ENCODE measurements at regions of chr12 and their contacts with region 1.

Region 1: DNA sequence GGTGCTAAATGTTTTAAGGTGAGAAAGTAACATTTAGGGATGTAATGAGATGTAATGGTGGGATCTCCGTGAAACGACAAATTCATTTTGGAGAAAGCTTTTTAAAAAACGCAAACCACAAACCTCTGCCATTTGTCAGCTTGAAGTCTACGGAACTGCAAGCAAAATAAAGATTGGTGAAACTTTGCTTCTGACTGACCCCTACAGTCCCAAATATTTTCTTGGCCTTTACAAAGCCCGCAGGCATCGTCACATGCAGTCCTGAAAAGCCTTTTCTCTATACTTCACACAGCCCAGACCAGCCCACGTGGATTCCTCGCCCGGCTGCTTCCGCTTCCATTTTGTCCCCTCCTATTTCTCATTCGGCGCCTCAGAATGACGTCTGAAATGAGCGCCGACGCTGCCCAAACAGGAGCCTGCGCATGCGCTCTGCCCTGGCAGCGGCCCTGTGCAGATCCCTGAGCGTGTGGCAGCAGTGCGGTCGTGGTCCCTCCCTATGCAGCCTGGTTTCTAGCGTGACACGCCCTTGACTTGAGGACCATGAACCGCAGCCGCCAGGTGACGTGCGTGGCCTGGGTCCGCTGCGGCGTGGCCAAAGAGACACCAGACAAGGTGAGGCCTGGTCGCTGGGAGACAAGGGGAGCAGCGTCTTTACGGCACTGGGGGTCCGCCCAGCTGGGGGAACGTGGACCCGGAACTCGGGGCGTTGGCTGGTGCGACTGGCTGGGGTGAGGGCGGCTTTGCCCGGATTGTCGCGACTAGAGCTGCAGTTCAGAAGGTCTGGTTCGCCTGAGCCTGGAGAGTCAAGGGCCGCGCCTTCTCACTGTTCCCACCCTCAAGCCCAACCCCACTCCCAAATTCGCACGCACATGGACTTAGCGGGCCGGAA is at the start of gene PWP1:
- DNase-seq: peak; percentile 82 to 91
- ATAC-seq: peak; percentile 97 to 98
- H3K4me3 ChIP-seq: peak within 1 kb of the TSS; percentile 74 to 97 (median 88)
- H3K27ac ChIP-seq: peak within 1 kb of the TSS; percentile 66 to 87 (median 82)
- H3K4me1 ChIP-seq: peaks cover 18 to 19% of the 10 kb centered on the region in 2 donors
- H3K27me3 ChIP-seq: no peaks in the 10 kb centered on the region
- CTCF ChIP-seq: peak in 1 of 5 experiments; percentile 16
- POLR2A ChIP-seq: peak; percentile 16 to 37
- total RNA-seq, gene PWP1: 37.9 to 62.1 (median 48.0) TPM

Region 2: DNA sequence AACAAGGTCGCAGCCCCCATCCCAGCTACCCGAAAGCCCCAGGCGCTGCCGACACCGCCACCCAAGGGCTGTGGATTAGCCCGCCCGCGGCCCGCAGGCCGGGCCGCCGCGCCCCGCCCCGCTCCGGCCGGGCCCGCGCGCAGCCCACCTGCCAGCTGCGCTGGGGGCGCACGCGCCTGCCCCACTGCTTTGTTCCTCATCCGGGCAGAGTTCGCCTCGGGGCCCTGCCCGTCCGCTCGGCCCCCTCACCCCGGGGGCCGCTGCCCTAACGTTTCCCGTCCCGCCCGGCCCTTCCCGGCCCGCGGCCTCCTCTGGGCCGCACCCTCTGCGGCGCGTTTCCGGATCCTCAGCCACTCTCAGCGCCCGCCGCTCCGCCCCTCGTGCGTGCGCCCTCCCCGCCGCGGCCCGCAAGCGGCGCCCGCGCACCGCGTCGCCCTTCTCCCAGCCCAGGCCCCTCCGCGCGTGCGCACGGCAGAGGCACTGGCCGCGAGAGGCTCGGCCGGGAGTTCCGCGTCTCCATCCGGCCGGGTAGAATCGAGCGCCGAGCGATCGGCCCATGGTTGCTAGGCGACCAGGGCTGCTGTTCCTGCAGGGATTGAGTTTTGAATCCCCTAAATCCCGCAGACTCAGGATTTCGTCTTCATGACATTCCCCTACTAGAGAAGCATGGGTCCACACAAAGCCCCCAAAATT is 75.4 kb after region 1 on chr12 and contains the start of gene PRDM4:
- in situ Hi-C with region 1: loop called in 1 of 4 experiments (anchors 5 kb)
- intact Hi-C with region 1: loop called (anchors 1 kb)
- DNase-seq: peak; percentile 87 to 91
- ATAC-seq: peak; percentile 95
- H3K4me3 ChIP-seq: peak within 1 kb of the TSS; percentile 73 to 93 (median 82)
- H3K27ac ChIP-seq: peak within 1 kb of the TSS; percentile 61 to 75 (median 67)
- H3K4me1 ChIP-seq: peaks cover 26 to 30% of the 10 kb centered on the region in 2 donors
- H3K27me3 ChIP-seq: no peaks in the 10 kb centered on the region
- CTCF ChIP-seq: peak in 4 of 5 experiments; percentile 33 to 60 (median 44)
- POLR2A ChIP-seq: peak; percentile 86 to 89
- total RNA-seq, gene PRDM4: 13.8 to 21.0 (median 19.2) TPM

Region 3: GRCh38 chr12:107912421-107913004 is 226.9 kb after region 1 on chr12:
- in situ Hi-C with region 1: no loop called
- intact Hi-C with region 1: no loop called
- DNase-seq: no peak
- ATAC-seq: no peak
- H3K4me3 ChIP-seq: no peak overlapping the region
- H3K27ac ChIP-seq: no peak overlapping the region
- H3K4me1 ChIP-seq: no peaks in the 10 kb centered on the region
- H3K27me3 ChIP-seq: peaks cover 0 to 11% (median 10%) of the 10 kb centered on the region in 3 donors
- CTCF ChIP-seq: peak in 3 of 5 experiments; percentile 10 to 38 (median 14)
- POLR2A ChIP-seq: no peak

Measured in gastrocnemius medialis (tissue), 4 donors.